ENCODE measurements at regions of chr2 and their contacts with region 1.

Region 1: DNA sequence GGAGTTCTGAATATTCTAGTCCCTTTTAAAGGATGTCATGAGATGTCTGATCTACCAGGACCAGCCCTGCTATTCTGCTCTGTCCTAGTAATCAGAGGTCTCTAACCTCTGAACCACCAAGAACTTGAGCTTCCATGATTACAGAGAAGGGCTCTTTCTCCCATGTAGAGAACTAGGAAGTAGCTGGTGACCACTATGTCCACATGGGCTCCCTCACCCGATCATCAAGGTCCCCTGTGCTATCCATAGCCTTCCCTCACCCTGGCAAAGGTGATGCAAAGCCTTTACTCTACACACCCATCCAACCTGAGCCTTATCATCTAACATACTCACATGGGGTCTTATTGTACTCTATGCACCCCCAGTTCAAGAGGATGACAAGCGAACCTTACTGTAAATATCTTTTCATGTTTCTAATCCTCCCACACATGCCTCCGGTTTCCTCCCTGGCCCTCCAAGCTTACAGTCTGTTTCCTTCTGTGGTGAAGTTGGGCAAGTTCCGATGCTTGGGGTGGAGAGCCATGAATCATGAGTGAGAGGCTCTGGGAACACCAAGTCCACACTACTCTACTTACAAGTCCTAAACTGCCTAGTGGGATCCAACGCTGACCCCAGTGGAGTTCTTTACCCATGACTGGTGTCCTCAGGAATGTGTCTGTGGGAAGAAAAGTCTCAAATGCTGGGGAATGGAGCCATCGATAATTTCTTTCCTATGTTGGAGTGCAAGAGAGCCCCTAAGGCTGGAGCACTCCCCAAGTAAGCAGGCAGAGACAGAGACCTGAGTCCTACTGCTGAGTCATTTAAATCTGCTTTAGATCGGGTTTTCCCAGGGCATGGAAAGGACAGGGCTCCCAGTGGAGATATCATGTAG is 73.3 kb upstream of the KLF7 start:
- DNase-seq: peak; percentile 70 to 92
- H3K4me3 ChIP-seq: no peak overlapping the region
- H3K27ac ChIP-seq: peak overlapping the region; percentile 78 to 84
- H3K4me1 ChIP-seq: peaks cover 12 to 21% of the 10 kb centered on the region in 2 donors
- H3K27me3 ChIP-seq: no peaks in the 10 kb centered on the region
- CTCF ChIP-seq: no peak

Region 2: DNA sequence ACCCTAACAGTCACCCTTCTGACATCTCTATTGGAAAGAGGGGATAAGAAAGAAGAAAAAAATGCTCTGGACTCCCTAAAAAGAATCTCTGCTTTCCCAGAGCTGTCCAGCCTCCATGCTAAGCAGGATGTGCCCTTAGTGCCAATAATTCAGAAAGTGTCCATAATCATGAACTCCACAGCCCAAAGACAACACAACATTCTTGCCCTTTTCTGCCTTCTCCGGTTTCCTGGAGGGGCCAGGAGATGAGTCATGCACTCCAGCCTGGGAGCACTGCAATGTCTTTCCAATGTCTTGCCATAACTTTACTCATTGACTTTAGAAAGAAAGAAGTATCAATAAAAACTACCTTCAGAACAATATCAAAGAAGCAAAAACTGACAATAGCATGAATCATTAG is 117.3 kb before region 1 on chr2:
- intact Hi-C with region 1: loop called (anchors 5 kb)
- DNase-seq: peak in 1 of 2 donors; percentile 77
- H3K4me3 ChIP-seq: no peak overlapping the region
- H3K27ac ChIP-seq: peak overlapping the region; percentile 20 to 60
- H3K4me1 ChIP-seq: peaks cover 3 to 37% of the 10 kb centered on the region in 2 donors
- H3K27me3 ChIP-seq: no peaks in the 10 kb centered on the region
- CTCF ChIP-seq: no peak

Region 3: DNA sequence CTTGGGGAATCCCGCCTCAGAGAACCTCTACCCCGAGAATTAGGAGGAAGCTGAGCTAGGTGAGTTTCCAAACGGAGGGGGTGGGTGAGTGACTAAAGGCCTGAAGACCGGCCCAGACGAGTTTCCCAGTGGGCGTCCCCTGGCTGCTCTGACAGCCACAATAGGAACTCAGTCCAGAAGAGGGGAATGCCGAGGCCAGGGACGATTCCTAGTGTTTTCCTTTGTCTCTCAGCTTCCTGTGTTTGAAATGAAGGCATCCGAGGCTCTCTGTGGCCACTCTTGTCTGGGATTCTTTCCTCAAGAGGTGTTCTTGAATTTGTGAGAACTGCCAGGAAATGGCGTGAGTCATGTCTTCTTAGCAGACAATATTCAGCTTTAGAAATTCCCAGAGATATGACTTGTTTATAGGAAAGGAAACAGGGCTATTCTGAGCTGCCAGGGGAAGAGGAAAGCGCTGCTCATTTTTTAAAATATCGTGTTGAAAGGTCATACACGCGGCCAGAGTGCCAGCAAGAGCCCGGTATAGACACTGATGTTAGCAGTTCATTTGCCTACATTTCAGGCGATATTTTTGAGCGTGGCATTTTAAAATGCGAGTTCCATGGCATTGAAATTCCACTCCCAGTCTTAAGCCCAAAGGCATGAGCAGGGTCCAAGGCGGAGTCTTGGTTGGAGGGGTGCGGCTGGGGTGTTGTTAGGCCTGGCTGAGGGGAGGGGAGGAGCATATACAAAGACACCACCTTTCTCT is 95.7 kb after region 1 on chr2:
- intact Hi-C with region 1: loop called (anchors 5 kb)
- DNase-seq: peak; percentile 14 to 89
- H3K4me3 ChIP-seq: peak overlapping the region; percentile 32 to 50
- H3K27ac ChIP-seq: peak overlapping the region; percentile 80 to 83
- H3K4me1 ChIP-seq: peaks cover 0 to 5% of the 10 kb centered on the region in 2 donors
- H3K27me3 ChIP-seq: no peaks in the 10 kb centered on the region
- CTCF ChIP-seq: no peak

Region 4: GRCh38 chr2:207662203-207662602 is 423.1 kb after region 1 on chr2:
- intact Hi-C with region 1: no loop called
- DNase-seq: no peak
- H3K4me3 ChIP-seq: no peak overlapping the region
- H3K27ac ChIP-seq: no peak overlapping the region
- H3K4me1 ChIP-seq: no peaks in the 10 kb centered on the region
- H3K27me3 ChIP-seq: no peaks in the 10 kb centered on the region
- CTCF ChIP-seq: no peak